Common myeloid progenitor, CD34-positive (primary cell): ENCODE measurements at regions of chrX and their contacts with region 1.

Region 1: GRCh38 chrX:48957827-48958634 is 624 bp upstream of the OTUD5 start:
- DNase-seq: peak; percentile 97 to 99 (median 98)
- H3K4me3 ChIP-seq: peak overlapping the region; percentile 57 to 87 (median 70)
- H3K27ac ChIP-seq: peak overlapping the region; percentile 95 to 98
- H3K4me1 ChIP-seq: peaks cover 18 to 61% (median 27%) of the 10 kb centered on the region in 4 experiments
- H3K27me3 ChIP-seq: no peaks in the 10 kb centered on the region

Region 2: GRCh38 chrX:48720577-48721250 is 237.3 kb before region 1 on chrX:
- CTCF ChIA-PET with region 1: no interaction called
- POLR2A ChIA-PET with region 1: no interaction called
- DNase-seq: no peak
- H3K4me3 ChIP-seq: no peak overlapping the region
- H3K27ac ChIP-seq: no peak overlapping the region
- H3K4me1 ChIP-seq: no peaks in the 10 kb centered on the region
- H3K27me3 ChIP-seq: no peaks in the 10 kb centered on the region

Region 3: DNA sequence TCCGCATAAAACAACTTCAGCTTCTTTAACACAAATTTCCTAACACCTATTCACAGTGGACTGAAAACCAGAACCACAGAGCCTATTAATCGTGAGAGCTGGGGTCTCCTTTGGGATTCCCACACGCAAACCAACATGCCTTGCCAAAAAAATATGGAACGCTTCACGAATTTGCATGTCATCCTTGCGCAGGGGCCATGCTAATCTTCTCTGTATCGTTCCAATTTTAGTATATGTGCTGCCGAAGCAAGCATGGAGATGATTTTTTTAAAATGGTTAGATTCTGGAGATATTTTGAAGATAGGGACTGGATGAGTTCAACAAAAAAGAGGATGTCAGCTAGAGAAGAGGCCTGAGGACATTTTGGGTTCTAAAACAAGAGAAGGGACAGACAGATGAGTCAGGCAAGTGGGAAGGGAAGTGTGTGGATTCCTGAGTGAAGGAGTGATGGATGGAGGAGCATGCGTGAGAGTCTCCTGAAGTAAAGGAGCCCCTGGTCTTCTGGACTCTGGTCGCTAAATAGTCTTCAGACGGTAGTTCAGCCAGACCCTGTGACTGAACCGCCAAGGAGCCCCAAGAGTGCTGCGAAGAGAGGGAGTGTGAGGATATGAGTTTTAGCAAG is 181.1 kb before region 1 on chrX:
- CTCF ChIA-PET with region 1: no interaction called
- POLR2A ChIA-PET with region 1: no interaction called
- DNase-seq: no peak
- H3K4me3 ChIP-seq: no peak overlapping the region
- H3K27ac ChIP-seq: no peak overlapping the region
- H3K4me1 ChIP-seq: no peaks in the 10 kb centered on the region
- H3K27me3 ChIP-seq: no peaks in the 10 kb centered on the region

Region 4: GRCh38 chrX:48945516-48946348 is 12.3 kb before region 1 on chrX:
- CTCF ChIA-PET with region 1: interaction called, 24 read pairs
- POLR2A ChIA-PET with region 1: no interaction called
- DNase-seq: peak; percentile 30 to 59 (median 50)
- H3K4me3 ChIP-seq: no peak overlapping the region
- H3K27ac ChIP-seq: peak overlapping the region in 1 of 2 experiments; percentile 34
- H3K4me1 ChIP-seq: peaks cover 0 to 31% (median 27%) of the 10 kb centered on the region in 4 experiments
- H3K27me3 ChIP-seq: no peaks in the 10 kb centered on the region

Region 5: DNA sequence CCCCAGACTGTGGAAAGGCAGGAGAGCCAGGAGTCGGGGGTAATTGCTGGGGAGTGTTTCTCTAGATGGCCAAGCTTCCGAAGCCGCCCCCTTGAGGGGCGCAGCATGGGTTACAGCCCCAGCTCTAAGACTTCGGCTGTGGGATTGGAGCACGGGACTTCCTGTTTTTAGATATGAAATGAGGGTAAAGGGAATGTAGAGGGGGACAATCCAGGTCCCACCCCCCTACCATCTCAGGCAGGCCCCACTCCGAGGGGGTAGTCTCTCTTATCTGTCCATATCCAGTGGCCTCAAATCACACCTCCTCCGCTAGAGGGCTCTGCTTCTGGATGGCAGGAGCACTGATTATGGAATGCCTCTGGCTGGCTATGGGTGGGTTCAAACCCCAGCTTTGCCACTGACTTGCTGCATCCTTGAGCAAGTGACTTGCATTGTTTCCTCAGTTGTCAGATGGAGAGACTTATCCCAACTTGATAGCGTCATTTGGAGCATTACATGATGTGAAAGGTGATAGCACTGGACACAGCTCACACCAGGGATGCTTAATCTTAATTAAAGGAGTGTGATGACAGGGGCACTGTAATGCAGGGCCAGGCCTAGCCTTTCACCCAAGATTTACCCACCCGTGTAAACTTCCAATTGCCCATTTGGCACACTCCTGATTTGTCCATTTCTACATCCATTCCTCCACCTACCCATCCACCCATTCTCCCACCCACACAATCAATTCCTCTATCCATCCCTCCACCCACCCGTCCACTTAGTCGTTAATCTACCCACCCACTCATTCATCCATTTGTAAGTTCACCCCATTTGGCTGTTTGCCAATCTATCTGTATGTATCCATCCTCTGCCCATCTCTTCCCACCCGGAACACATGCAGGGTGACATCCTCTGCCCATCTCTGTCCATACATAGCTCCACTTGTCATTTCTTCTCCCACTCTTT is 14.5 kb after region 1 on chrX:
- CTCF ChIA-PET with region 1: interaction called, 12 read pairs
- POLR2A ChIA-PET with region 1: interaction called, 10 read pairs
- DNase-seq: peak; percentile 58 to 81 (median 78)
- H3K4me3 ChIP-seq: peak overlapping the region in 6 of 7 experiments; percentile 39 to 77 (median 60)
- H3K27ac ChIP-seq: no peak overlapping the region
- H3K4me1 ChIP-seq: peaks cover 0 to 25% (median 16%) of the 10 kb centered on the region in 4 experiments
- H3K27me3 ChIP-seq: no peaks in the 10 kb centered on the region